ENCODE measurements at regions of chr19 and their contacts with region 1.

Region 1: DNA sequence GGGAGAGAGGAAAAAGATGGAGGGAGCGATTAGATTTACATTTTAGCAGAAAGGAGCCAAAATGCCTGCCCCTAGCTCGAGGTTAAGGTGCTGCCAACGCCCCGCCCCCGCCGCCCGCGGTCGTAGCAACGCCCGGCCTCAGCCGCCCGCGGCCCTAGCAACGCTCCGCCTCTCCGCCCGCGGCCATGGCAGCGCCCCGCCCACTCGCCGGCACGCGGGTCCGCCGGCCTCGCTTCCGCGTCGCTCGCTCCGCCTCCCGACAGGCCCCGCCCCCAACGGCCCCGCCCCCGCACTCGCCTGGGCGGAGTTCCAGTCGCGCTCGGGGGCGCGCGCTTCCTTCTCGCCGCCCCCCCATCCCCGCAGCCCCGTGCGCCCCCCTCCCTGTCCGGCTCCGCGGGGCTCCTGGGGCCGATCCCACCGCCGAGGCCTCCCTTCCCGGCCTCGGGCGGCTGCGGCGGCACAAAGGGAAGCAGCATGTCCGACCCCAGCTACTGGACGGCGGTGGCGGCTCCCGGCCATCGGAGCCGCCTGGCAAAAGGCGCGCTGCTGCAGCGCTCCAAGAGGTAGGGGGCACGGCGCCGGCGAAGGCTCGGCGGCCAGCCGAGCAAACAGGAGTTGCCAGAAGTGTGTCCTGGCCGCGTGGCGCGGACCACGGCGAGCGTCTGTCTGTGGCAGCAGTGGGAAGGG is 20.3 kb downstream of the MAST3 start:
- DNase-seq: peak; percentile 88 to 99 (median 96)
- ATAC-seq: peak; percentile 72
- H3K4me3 ChIP-seq: peak overlapping the region; percentile 86
- H3K4me3 Mint-ChIP-seq: peak overlapping the region; percentile 90
- H3K27ac ChIP-seq: peak overlapping the region; percentile 77 to 80
- H3K27ac Mint-ChIP-seq: peak overlapping the region; percentile 97
- H3K4me1 ChIP-seq: peaks cover 58% of the 10 kb centered on the region
- H3K4me1 Mint-ChIP-seq: peaks cover 37% of the 10 kb centered on the region
- H3K27me3 ChIP-seq: no peaks in the 10 kb centered on the region
- H3K27me3 Mint-ChIP-seq: no peaks in the 10 kb centered on the region
- CTCF ChIP-seq: no peak

Region 2: GRCh38 chr19:18091217-18091608 is 26.6 kb before region 1 on chr19:
- CTCF ChIA-PET with region 1: interaction called, 5 read pairs
- POLR2A ChIA-PET with region 1: interaction called, 58 read pairs
- intact Hi-C with region 1: no loop called
- DNase-seq: peak; percentile 55 to 94 (median 74)
- ATAC-seq: peak; percentile 69
- H3K4me3 ChIP-seq: no peak overlapping the region
- H3K4me3 Mint-ChIP-seq: peak overlapping the region; percentile 82
- H3K27ac ChIP-seq: peak overlapping the region; percentile 74 to 93
- H3K27ac Mint-ChIP-seq: peak overlapping the region; percentile 98
- H3K4me1 ChIP-seq: peaks cover 67% of the 10 kb centered on the region
- H3K4me1 Mint-ChIP-seq: peaks cover 58% of the 10 kb centered on the region
- H3K27me3 ChIP-seq: no peaks in the 10 kb centered on the region
- H3K27me3 Mint-ChIP-seq: no peaks in the 10 kb centered on the region
- CTCF ChIP-seq: no peak

Region 3: GRCh38 chr19:18152444-18152816 is 34.6 kb after region 1 on chr19:
- CTCF ChIA-PET with region 1: interaction called, 10 read pairs
- POLR2A ChIA-PET with region 1: interaction called, 51 read pairs
- intact Hi-C with region 1: loop called (anchors 1 to 2 kb)
- DNase-seq: peak; percentile 94 to 99 (median 98)
- ATAC-seq: peak; percentile 67
- H3K4me3 ChIP-seq: peak overlapping the region; percentile 78
- H3K4me3 Mint-ChIP-seq: peak overlapping the region; percentile 86
- H3K27ac ChIP-seq: peak overlapping the region; percentile 64 to 88
- H3K27ac Mint-ChIP-seq: peak overlapping the region; percentile 80
- H3K4me1 ChIP-seq: peaks cover 36% of the 10 kb centered on the region
- H3K4me1 Mint-ChIP-seq: peaks cover 23% of the 10 kb centered on the region
- H3K27me3 ChIP-seq: no peaks in the 10 kb centered on the region
- H3K27me3 Mint-ChIP-seq: no peaks in the 10 kb centered on the region
- CTCF ChIP-seq: peak; percentile 58

Region 4: GRCh38 chr19:18167975-18168645 is 50.3 kb after region 1 on chr19:
- CTCF ChIA-PET with region 1: interaction called, 7 read pairs
- POLR2A ChIA-PET with region 1: interaction called, 3 read pairs
- intact Hi-C with region 1: loop called in 1 of 2 experiments (anchors 1 kb)
- DNase-seq: peak; percentile 42 to 80 (median 53)
- ATAC-seq: peak; percentile 97
- H3K4me3 ChIP-seq: no peak overlapping the region
- H3K4me3 Mint-ChIP-seq: no peak overlapping the region
- H3K27ac ChIP-seq: no peak overlapping the region
- H3K27ac Mint-ChIP-seq: no peak overlapping the region
- H3K4me1 ChIP-seq: peaks cover 16% of the 10 kb centered on the region
- H3K4me1 Mint-ChIP-seq: peaks cover 4% of the 10 kb centered on the region
- H3K27me3 ChIP-seq: no peaks in the 10 kb centered on the region
- H3K27me3 Mint-ChIP-seq: no peaks in the 10 kb centered on the region
- CTCF ChIP-seq: peak; percentile 72

Region 5: DNA sequence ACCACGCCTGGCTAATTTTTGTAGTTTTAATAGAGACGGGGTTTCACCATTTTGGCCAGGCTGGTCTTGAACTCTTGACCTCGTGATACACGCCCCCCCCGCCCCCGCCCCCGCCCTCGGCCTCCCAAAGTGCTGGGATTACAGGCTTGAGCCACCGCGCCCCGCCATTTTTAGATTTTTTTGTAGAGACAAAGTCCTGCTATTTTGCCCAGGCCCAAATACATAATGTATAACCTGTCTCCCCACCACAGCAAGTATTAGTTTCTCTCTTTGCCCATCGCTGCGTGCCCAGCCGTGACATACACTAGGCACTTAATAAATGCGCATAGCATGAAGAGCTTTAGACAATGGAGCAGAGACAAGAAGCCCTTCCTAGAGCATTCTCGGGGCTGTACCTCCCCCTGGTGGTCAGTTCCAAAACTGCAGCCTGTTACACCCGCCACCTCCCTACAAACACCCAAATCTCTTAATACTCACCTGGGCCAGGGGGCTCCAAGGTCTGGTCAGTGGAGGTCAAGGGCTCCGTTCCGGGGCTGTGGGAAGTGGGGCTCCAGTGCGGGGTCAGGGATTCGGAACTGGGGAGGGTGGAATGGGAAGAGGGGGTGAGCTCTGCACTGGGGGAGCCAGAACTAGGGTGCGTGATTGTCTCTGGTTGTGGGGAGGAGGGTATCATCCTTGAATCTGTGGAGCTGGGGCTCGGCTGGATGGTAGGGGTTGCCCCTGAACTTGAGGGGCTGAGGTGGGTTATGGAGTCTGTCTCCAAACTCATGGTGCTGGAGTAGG is 133.9 kb after region 1 on chr19:
- CTCF ChIA-PET with region 1: no interaction called
- POLR2A ChIA-PET with region 1: no interaction called
- intact Hi-C with region 1: loop called in 1 of 2 experiments (anchors 2 kb)
- DNase-seq: peak; percentile 65 to 90 (median 81)
- ATAC-seq: peak; percentile 91
- H3K4me3 ChIP-seq: no peak overlapping the region
- H3K4me3 Mint-ChIP-seq: no peak overlapping the region
- H3K27ac ChIP-seq: no peak overlapping the region
- H3K27ac Mint-ChIP-seq: no peak overlapping the region
- H3K4me1 ChIP-seq: peaks cover 8% of the 10 kb centered on the region
- H3K4me1 Mint-ChIP-seq: no peaks in the 10 kb centered on the region
- H3K27me3 ChIP-seq: peaks cover 8 to 12% of the 10 kb centered on the region in 2 experiments
- H3K27me3 Mint-ChIP-seq: peaks cover 31% of the 10 kb centered on the region
- CTCF ChIP-seq: peak; percentile 80